Mammary epithelial cell (primary cell): ENCODE measurements at regions of chr1 and their contacts with region 1.

Region 1: GRCh38 chr1:17335821-17336710 is 28.1 kb downstream of the PADI4 start:
- DNase-seq: peak; percentile 50
- H3K4me3 ChIP-seq: no peak overlapping the region
- H3K27ac ChIP-seq: no peak overlapping the region
- H3K4me1 ChIP-seq: peaks cover 11% of the 10 kb centered on the region
- H3K27me3 ChIP-seq: no peaks in the 10 kb centered on the region
- CTCF ChIP-seq: peak; percentile 93 to 94

Region 2: GRCh38 chr1:17059739-17060460 is 276.2 kb before region 1 on chr1:
- CTCF ChIA-PET with region 1: no interaction called
- dilution Hi-C with region 1: no loop called
- in situ Hi-C with region 1: no loop called
- intact Hi-C with region 1: loop called (anchors 1 kb)
- DNase-seq: peak; percentile 60
- H3K4me3 ChIP-seq: no peak overlapping the region
- H3K27ac ChIP-seq: no peak overlapping the region
- H3K4me1 ChIP-seq: peaks cover 8% of the 10 kb centered on the region
- H3K27me3 ChIP-seq: no peaks in the 10 kb centered on the region
- CTCF ChIP-seq: peak; percentile 76 to 85

Region 3: GRCh38 chr1:17168091-17168876 is 167.8 kb before region 1 on chr1:
- CTCF ChIA-PET with region 1: no interaction called
- dilution Hi-C with region 1: no loop called
- in situ Hi-C with region 1: no loop called
- intact Hi-C with region 1: no loop called
- DNase-seq: peak; percentile 93
- H3K4me3 ChIP-seq: no peak overlapping the region
- H3K27ac ChIP-seq: peak overlapping the region; percentile 49
- H3K4me1 ChIP-seq: peaks cover 19% of the 10 kb centered on the region
- H3K27me3 ChIP-seq: no peaks in the 10 kb centered on the region
- CTCF ChIP-seq: no peak

Region 4: DNA sequence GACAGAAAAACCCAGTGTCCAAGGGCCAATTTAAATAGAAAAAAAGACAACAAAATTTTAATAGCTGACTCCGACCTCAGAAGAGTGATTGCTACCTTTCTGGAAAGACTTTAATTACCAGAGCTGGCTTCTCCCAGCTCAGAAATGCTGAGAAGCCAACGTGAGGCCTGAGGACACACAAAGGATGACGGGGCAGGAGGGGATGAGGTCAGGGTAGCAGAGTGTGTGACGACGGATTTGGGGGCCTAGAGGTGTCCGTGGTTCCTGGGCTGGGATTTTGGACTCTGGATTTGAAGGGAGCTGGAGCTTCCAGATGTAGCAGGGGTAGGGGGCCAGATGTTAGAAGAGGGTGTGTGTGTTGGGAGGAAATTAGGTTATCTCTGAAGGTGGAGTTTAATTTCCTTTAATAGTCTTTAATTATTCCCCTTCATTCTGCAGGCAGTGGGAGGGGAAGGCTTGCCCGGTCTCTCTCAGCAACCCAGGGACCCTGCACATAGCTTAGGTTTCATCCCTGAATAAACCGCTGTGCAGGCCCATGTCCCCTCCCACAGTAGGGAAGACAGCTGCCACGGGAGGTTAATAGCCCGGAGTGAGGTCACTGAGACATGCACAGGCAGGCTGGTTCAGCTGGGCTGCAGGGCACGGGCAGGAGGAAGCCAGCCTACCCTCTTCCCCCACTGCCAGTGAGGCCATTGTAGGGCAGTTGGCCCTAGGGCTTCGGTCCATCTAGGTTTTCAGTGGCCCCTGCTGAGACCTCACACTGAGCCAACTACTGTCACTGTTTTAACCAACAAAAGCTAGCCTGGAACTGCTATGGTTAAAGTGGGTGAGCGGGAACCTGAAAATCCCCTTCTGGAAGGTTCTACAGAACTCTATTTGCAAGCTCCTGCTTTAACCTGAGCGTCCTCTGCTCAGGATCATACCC is 91.0 kb before region 1 on chr1:
- CTCF ChIA-PET with region 1: interaction called, 5 read pairs
- dilution Hi-C with region 1: no loop called
- in situ Hi-C with region 1: loop called in 1 of 2 experiments (anchors 10 kb)
- intact Hi-C with region 1: no loop called
- DNase-seq: peak; percentile 60
- H3K4me3 ChIP-seq: no peak overlapping the region
- H3K27ac ChIP-seq: no peak overlapping the region
- H3K4me1 ChIP-seq: peaks cover 31% of the 10 kb centered on the region
- H3K27me3 ChIP-seq: no peaks in the 10 kb centered on the region
- CTCF ChIP-seq: no peak

Region 5: GRCh38 chr1:17274186-17275170 is 61.6 kb before region 1 on chr1:
- CTCF ChIA-PET with region 1: no interaction called
- dilution Hi-C with region 1: no loop called
- in situ Hi-C with region 1: no loop called
- intact Hi-C with region 1: loop called (anchors 1 kb)
- DNase-seq: peak; percentile 39
- H3K4me3 ChIP-seq: no peak overlapping the region
- H3K27ac ChIP-seq: no peak overlapping the region
- H3K4me1 ChIP-seq: peaks cover 10% of the 10 kb centered on the region
- H3K27me3 ChIP-seq: no peaks in the 10 kb centered on the region
- CTCF ChIP-seq: peak; percentile 63 to 77

Region 6: GRCh38 chr1:17393230-17393629 is 57.2 kb after region 1 on chr1:
- CTCF ChIA-PET with region 1: no interaction called
- dilution Hi-C with region 1: loop called (anchors 10 kb)
- in situ Hi-C with region 1: no loop called
- intact Hi-C with region 1: no loop called
- DNase-seq: no peak
- H3K4me3 ChIP-seq: no peak overlapping the region
- H3K27ac ChIP-seq: no peak overlapping the region
- H3K4me1 ChIP-seq: no peaks in the 10 kb centered on the region
- H3K27me3 ChIP-seq: no peaks in the 10 kb centered on the region
- CTCF ChIP-seq: no peak

Region 7: DNA sequence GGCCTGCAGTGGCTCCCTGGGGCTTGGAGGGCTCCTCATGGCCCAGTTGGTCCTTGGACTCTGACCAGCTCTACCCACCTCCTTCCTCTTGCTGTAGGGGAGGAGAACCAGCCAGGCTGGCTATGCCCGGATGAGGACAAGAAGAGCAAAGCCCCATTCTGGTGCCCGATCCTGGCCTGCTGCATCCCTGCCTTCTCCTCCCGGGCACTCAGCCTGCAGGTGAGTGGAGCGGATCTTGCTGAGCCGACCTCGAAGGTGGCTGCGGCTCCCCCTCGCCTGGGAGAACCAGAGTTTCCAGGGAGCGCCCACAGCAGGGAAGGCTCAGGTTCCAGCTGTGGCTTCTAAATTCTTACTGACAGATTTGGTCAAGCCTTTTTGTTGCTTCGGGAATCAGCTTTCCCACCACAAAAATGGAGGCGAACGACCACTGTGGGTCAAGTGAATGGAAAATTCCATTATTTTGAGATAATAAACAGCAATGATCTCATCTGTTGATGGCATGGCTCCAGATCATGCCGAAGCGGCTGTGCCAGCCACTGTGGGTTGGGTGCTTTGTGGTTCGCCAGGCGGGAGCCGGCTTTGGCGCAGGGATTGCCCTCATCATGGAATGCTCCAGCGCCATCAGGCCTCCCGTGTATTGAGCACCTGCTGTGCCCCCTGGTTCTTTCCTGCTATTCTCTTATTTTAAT is 312.5 kb after region 1 on chr1:
- CTCF ChIA-PET with region 1: no interaction called
- dilution Hi-C with region 1: no loop called
- in situ Hi-C with region 1: no loop called
- intact Hi-C with region 1: no loop called
- DNase-seq: peak; percentile 19
- H3K4me3 ChIP-seq: no peak overlapping the region
- H3K27ac ChIP-seq: no peak overlapping the region
- H3K4me1 ChIP-seq: no peaks in the 10 kb centered on the region
- H3K27me3 ChIP-seq: no peaks in the 10 kb centered on the region
- CTCF ChIP-seq: no peak